Endothelial cell of umbilical vein (primary cell): ENCODE measurements at regions of chr13 and their contacts with region 1.

Region 1: GRCh38 chr13:52159321-52160086 is at the start of gene NEK3:
- DNase-seq: peak; percentile 71
- H3K4me3 ChIP-seq: peak within 1 kb of the TSS; percentile 81 to 92 (median 90)
- H3K27ac ChIP-seq: peak within 1 kb of the TSS; percentile 46
- H3K4me1 ChIP-seq: peaks cover 52% of the 10 kb centered on the region
- H3K27me3 ChIP-seq: no peaks in the 10 kb centered on the region
- CTCF ChIP-seq: no peak
- POLR2A ChIP-seq: no peak
- total RNA-seq, gene NEK3: 13.8 and 23.5 TPM in 2 replicates

Region 2: GRCh38 chr13:51814825-51815650 is 344.5 kb before region 1 on chr13:
- CTCF ChIA-PET with region 1: no interaction called
- POLR2A ChIA-PET with region 1: no interaction called
- dilution Hi-C with region 1: no loop called
- intact Hi-C with region 1: no loop called
- DNase-seq: peak; percentile 63
- H3K4me3 ChIP-seq: peak overlapping the region in 1 of 3 experiments; percentile 23
- H3K27ac ChIP-seq: no peak overlapping the region
- H3K4me1 ChIP-seq: peaks cover 6% of the 10 kb centered on the region
- H3K27me3 ChIP-seq: peaks cover 9 to 22% of the 10 kb centered on the region in 2 experiments
- CTCF ChIP-seq: peak; percentile 74 to 82
- POLR2A ChIP-seq: no peak

Region 3: DNA sequence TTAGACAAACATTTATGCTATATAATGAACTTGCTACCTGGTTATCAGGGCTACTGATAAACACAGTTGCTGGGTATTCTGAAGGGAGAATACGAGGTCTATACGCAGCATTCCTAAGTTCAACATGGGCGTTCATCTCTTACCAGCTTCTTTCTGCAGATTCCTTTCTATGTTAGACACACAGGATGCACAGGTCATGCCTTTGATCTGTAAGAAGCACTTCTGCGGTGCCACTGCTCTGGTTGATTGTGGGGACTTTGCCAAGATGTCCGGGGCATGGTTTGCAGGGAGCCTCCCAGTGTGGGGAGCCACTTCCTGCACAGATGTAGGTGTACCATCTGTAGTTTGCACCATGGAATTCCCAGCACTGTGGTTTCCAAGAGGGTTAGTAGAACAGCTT is 189.2 kb before region 1 on chr13:
- CTCF ChIA-PET with region 1: no interaction called
- POLR2A ChIA-PET with region 1: no interaction called
- dilution Hi-C with region 1: no loop called
- intact Hi-C with region 1: no loop called
- DNase-seq: no peak
- H3K4me3 ChIP-seq: no peak overlapping the region
- H3K27ac ChIP-seq: no peak overlapping the region
- H3K4me1 ChIP-seq: no peaks in the 10 kb centered on the region
- H3K27me3 ChIP-seq: peaks cover 0 to 3% of the 10 kb centered on the region in 2 experiments
- CTCF ChIP-seq: no peak
- POLR2A ChIP-seq: no peak

Region 4: DNA sequence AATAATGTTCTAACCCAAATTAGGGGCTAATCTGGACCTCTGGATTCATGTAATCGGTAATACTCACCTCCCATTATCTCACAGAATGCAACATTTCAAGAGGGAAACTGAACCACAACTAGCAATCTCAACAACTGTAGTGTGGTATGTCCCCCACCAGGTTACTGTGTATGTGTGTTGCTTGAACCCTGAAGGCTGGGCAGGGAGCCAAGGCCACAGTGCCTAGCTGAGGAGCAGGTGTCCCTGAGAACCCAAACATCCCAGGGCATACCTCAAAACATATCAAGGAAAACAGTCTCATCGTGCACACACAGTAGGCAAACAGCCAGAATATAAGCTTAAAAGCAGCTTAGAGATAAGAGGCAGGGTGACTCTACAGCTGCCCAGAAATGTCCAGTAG is 20.4 kb after region 1 on chr13:
- CTCF ChIA-PET with region 1: interaction called, 10 read pairs
- POLR2A ChIA-PET with region 1: no interaction called
- dilution Hi-C with region 1: no loop called
- intact Hi-C with region 1: loop called (anchors 2 kb)
- DNase-seq: no peak
- H3K4me3 ChIP-seq: no peak overlapping the region
- H3K27ac ChIP-seq: no peak overlapping the region
- H3K4me1 ChIP-seq: peaks cover 5% of the 10 kb centered on the region
- H3K27me3 ChIP-seq: no peaks in the 10 kb centered on the region
- CTCF ChIP-seq: no peak
- POLR2A ChIP-seq: no peak